Activated naive CD4-positive, alpha-beta T cell treated with anti-CD3 and anti-CD28 coated beads for 36 hours (primary cell): ENCODE measurements at regions of chr1 and their contacts with region 1.

Region 1: GRCh38 chr1:225911191-225912130 is 12.6 kb downstream of the PYCR2 start:
- DNase-seq: peak; percentile 75
- H3K4me3 Mint-ChIP-seq: no peak overlapping the region
- H3K27ac Mint-ChIP-seq: no peak overlapping the region
- H3K4me1 Mint-ChIP-seq: peaks cover 21% of the 10 kb centered on the region
- H3K27me3 Mint-ChIP-seq: no peaks in the 10 kb centered on the region

Region 2: DNA sequence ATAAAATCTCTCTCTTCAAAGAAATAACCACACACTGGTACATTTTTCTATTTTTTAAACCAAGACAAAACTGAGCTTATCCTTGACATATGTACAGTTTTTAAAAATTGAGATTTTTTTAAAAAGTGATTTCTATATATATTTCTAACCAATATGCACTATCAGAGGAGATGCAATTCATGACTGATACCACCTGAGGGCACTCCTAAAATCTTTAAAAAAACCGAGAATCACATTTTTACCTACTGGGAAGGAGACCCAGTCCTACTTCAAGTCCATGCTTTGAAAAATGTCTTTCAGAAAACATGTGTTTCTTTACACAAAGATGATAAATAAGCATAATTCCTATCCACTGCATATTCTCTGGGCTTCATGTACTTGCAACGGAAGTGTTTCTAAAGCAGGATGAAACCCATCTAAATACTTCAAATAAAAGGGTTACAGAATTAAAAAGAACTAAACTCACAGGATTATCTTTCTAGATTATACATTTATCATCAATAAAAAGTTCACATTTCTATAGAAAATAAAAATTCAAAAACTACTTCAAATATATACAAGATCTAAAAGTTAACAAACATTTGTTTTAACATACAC is 357.1 kb before region 1 on chr1:
- CTCF ChIA-PET with region 1: interaction called, 6 read pairs
- intact Hi-C with region 1: loop called (anchors 1 kb)
- DNase-seq: no peak
- H3K4me3 Mint-ChIP-seq: no peak overlapping the region
- H3K27ac Mint-ChIP-seq: no peak overlapping the region
- H3K4me1 Mint-ChIP-seq: no peaks in the 10 kb centered on the region
- H3K27me3 Mint-ChIP-seq: peaks cover 2% of the 10 kb centered on the region

Region 3: GRCh38 chr1:225617479-225617878 is 294.0 kb before region 1 on chr1:
- CTCF ChIA-PET with region 1: no interaction called
- intact Hi-C with region 1: no loop called
- DNase-seq: no peak
- H3K4me3 Mint-ChIP-seq: no peak overlapping the region
- H3K27ac Mint-ChIP-seq: no peak overlapping the region
- H3K4me1 Mint-ChIP-seq: no peaks in the 10 kb centered on the region
- H3K27me3 Mint-ChIP-seq: no peaks in the 10 kb centered on the region

Region 4: DNA sequence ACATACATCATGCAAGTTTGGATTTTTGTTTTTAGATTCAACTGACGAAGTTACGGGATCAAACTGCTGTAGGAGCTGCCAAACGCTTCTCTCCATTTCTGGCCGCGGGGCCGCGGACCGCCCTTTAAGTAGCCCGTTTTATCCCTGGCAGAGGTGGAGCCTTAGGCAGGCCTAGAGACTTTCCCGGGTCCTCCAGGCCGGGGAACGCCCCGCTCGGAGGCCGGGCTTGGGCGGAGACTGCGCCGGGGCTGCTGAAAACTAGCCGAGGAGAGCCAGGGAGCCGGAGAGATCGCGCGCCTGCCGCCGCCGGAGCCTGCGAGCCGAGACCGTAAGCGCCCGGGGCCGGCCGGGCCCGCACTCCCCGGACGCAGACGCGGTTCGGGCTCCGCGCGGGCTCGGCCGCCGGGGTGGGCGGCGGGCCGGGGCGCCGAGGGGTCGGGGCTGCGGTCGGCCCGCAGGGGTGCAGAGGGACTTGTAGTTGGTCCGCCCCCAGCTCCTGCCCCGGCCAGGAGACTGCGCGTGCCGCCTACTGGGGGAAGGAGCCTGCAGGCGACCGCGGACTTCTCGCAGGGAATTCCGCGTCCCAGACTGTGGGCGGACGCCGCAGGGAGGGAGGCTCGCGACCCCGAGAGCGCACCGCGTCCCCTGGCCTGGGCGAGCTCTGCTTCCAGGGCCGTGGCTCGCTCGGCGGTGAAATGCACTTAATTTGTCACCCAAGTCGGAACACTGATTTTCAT is 101.5 kb before region 1 on chr1 and contains the start of gene EPHX1:
- CTCF ChIA-PET with region 1: interaction called, 10 read pairs
- intact Hi-C with region 1: no loop called
- DNase-seq: peak; percentile 79
- H3K4me3 Mint-ChIP-seq: peak within 1 kb of the TSS; percentile 71
- H3K27ac Mint-ChIP-seq: peak within 1 kb of the TSS; percentile 59
- H3K4me1 Mint-ChIP-seq: peaks cover 14% of the 10 kb centered on the region
- H3K27me3 Mint-ChIP-seq: no peaks in the 10 kb centered on the region
- total RNA-seq, gene EPHX1: 3.8 to 5.0 TPM

Region 5: DNA sequence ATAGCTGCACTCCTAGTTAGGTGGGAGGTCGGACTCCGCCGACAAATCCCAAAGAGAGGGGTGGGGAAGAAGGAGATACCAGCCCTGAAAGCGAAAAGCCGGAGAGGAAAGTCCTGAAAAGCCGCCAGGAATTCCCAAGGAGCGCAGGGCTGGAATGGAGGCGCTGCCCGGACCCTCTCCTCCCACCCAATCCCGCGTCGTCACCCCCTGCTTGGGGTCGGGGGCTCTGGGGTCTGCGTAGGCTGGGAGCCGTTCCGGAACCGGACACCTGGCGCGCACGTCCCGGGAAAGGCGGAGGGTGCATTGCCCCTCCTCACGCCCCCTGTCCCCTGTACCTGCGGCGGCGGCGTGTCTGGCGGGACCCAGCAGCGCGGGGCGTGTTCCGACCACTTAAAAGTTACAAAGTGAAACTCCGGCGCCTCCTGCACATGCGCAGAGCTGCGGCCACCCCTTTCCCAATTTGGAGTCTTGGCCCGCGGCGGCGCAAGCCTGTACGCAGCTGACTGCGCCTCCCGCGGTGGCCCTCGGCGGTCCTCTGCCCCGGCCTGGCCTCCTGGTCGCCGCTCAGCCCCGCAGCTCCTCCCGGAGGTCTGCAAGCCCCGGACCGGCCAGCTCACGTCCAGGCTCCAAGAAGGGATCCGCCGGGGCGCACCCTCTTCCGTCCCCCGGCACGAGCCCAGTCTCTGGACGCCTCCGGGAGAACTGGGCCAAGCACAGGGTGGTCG is 29.3 kb before region 1 on chr1 and contains the start of gene TMEM63A:
- CTCF ChIA-PET with region 1: interaction called, 13 read pairs
- intact Hi-C with region 1: loop called (anchors 1 kb)
- DNase-seq: peak; percentile 88
- H3K4me3 Mint-ChIP-seq: peak within 1 kb of the TSS; percentile 92
- H3K27ac Mint-ChIP-seq: peak within 1 kb of the TSS; percentile 91
- H3K4me1 Mint-ChIP-seq: peaks cover 49% of the 10 kb centered on the region
- H3K27me3 Mint-ChIP-seq: no peaks in the 10 kb centered on the region
- total RNA-seq, gene TMEM63A: 34.3 to 34.7 TPM

Region 6: DNA sequence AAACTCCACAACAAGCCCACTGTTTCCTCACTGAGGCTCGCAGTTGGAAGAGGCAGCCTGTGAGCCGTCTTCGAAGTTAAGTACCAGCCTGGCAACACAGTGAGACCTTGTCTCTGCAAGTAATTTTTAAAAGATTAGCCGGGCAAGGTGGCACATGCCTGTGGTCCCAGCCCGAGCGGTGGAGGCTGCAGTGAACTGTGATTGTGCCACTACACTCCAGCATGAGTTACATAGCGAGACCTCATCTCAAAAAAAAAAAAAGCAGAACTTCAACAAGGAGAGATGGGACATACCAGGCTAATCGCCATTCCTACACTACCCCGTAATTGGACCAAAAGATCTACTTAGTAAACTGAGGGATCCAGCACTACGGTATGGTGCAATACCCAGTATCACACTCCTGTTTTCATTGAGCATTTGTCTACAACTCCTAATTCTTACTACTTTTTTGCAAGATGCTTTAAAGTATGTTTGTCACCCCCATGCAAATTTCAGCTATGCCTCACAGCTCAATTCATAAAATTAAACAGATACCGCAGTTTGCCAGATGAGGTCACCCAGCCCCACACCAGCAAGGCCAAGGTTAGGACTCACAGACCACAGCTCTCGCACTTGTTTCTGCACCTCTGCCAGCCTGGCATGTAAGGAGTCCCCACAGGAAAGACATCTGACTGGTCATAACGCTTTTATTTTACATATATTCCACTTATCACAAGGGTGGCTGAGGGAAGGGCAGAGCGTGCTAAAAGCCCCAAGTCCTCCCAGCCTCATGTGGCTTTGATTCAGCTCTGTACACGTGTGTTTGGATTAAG is 66.7 kb after region 1 on chr1:
- CTCF ChIA-PET with region 1: no interaction called
- intact Hi-C with region 1: loop called (anchors 1 kb)
- DNase-seq: no peak
- H3K4me3 Mint-ChIP-seq: no peak overlapping the region
- H3K27ac Mint-ChIP-seq: no peak overlapping the region
- H3K4me1 Mint-ChIP-seq: peaks cover 7% of the 10 kb centered on the region
- H3K27me3 Mint-ChIP-seq: no peaks in the 10 kb centered on the region

Region 7: DNA sequence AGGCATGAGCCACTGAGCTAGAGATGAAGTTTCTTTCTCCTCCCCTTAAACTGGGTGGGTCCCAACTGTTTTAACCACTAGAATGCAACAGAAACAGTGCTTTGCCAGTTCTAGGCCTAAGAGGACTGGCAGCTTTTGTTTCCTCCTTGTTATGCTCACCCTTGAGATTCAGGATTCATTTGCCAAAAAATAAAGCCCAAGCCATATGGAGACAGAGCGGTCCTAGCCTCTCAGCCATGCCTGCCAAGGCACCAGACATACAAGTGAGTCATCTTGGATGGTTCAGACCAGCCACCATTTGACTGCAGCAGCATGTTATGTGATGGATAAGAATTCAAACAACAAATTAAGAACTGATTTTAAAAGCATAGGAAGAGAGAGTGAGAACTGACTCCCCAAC is 599.0 kb after region 1 on chr1:
- CTCF ChIA-PET with region 1: no interaction called
- intact Hi-C with region 1: no loop called
- DNase-seq: no peak
- H3K4me3 Mint-ChIP-seq: no peak overlapping the region
- H3K27ac Mint-ChIP-seq: no peak overlapping the region
- H3K4me1 Mint-ChIP-seq: no peaks in the 10 kb centered on the region
- H3K27me3 Mint-ChIP-seq: peaks cover 10% of the 10 kb centered on the region